HCT116 (cell line): ENCODE measurements at regions of chr11 and their contacts with region 1.

Region 1: DNA sequence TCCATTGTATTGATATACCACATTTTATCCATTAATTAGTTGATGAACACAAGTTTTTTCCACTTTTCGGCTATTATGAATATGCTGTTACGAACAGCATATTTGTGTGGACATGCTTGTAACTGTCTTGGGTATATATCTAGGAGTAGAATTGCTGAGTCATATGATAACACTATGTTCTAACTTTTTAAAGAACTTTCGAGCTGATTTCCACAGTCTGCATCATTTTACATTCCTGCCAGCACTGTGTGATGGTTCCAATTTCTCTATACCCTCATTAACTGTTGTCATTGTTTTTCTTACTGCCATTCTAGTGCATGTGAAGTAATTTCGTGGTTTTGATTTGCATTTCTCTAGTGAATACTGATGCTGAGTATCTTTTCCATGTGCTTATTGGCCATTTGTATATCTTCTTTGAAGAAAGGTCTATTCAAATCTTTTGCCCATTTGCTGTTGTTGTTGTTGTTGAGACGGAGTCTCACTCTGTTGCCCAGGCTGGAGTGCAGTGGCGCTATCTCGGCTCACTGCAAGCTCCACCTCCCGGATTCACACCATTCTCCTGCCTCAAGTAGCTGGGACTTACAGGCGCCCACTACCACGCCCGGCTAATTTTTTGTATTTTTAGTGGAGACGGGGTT is 7.4 kb upstream of the RCE1 start:
- DNase-seq: no peak
- ATAC-seq: no peak
- H3K4me3 ChIP-seq: no peak overlapping the region
- H3K27ac ChIP-seq: no peak overlapping the region
- H3K4me1 ChIP-seq: no peaks in the 10 kb centered on the region
- H3K27me3 ChIP-seq: no peaks in the 10 kb centered on the region
- CTCF ChIP-seq: no peak
- POLR2A ChIP-seq: no peak
- RAD21 ChIP-seq: no peak

Region 2: DNA sequence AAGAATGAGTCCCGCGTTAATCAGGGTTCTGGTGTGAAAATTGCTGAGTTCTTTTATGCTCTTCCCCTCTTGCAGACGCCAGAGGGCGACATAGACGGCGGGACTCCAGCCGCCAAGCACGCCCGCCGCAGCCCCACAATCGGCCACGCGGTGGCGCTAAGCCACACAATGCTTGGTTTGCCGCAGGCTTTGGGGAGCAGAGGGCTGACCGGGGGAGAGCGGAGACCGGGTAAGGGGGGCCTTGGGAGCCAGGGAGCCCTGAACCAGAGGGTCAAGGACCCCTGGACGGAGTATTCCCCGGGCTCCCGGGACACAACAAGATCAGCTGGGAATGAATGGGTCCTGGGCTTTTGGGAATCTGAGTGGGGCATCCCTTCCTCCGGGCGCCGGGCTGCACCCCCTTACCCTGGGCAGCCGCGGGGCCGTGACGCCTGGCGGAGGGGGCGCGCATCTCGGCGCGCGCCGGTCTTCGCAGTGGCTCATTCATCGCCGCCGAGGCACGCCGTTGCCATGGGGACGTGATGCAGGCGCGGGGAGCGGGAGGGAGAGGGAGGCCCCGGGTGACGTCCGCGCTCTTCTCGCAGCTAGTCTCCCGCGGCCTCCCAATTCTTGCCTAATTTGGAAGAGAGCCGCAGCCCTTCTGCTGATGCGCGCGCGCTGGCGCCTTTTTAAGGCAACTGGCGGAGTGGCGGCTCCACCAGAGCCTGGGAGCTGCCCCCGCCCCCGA is 427.2 kb before region 1 on chr11:
- CTCF ChIA-PET with region 1: no interaction called
- POLR2A ChIA-PET with region 1: no interaction called
- RAD21 ChIA-PET with region 1: no interaction called
- intact Hi-C with region 1: loop called (anchors 5 kb)
- DNase-seq: peak; percentile 62
- ATAC-seq: peak; percentile 92
- H3K4me3 ChIP-seq: peak overlapping the region; percentile 26 to 45; a peak in 3 of 4 replicates
- H3K27ac ChIP-seq: no peak overlapping the region
- H3K4me1 ChIP-seq: peaks cover 0 to 3% of the 10 kb centered on the region in 2 experiments; a peak in 1 of 4 replicates
- H3K27me3 ChIP-seq: peaks cover 16% of the 10 kb centered on the region; the same call in 1 of the 2 replicates
- CTCF ChIP-seq: peak; percentile 99 to 100 (median 100)
- POLR2A ChIP-seq: no peak
- RAD21 ChIP-seq: peak; percentile 99

Region 3: GRCh38 chr11:66438504-66439466 is 397.1 kb before region 1 on chr11 and contains the start of gene MRPL11:
- CTCF ChIA-PET with region 1: no interaction called
- POLR2A ChIA-PET with region 1: no interaction called
- RAD21 ChIA-PET with region 1: no interaction called
- intact Hi-C with region 1: loop called (anchors 10 kb)
- DNase-seq: peak; percentile 91
- ATAC-seq: peak; percentile 93
- H3K4me3 ChIP-seq: peak within 1 kb of the TSS; percentile 68 to 96
- H3K27ac ChIP-seq: peak within 1 kb of the TSS; percentile 85
- H3K4me1 ChIP-seq: peaks cover 4 to 23% of the 10 kb centered on the region in 2 experiments; a peak in 3 of 4 replicates
- H3K27me3 ChIP-seq: no peaks in the 10 kb centered on the region
- CTCF ChIP-seq: peak; percentile 54 to 60 (median 60); a peak in 5 of 6 replicates
- POLR2A ChIP-seq: peak; percentile 30
- RAD21 ChIP-seq: peak; percentile 49
- total RNA-seq, gene MRPL11: 126 TPM

Region 4: GRCh38 chr11:66579017-66579606 is 256.8 kb before region 1 on chr11:
- CTCF ChIA-PET with region 1: no interaction called
- POLR2A ChIA-PET with region 1: no interaction called
- RAD21 ChIA-PET with region 1: no interaction called
- intact Hi-C with region 1: loop called (anchors 5 kb)
- DNase-seq: peak; percentile 31
- ATAC-seq: peak; percentile 97
- H3K4me3 ChIP-seq: no peak overlapping the region
- H3K27ac ChIP-seq: no peak overlapping the region
- H3K4me1 ChIP-seq: 0 out of 4 replicates have a peak, but pooled peaks cover 0 to 3% of the 10 kb centered on the region in 2 experiments
- H3K27me3 ChIP-seq: no peaks in the 10 kb centered on the region
- CTCF ChIP-seq: peak; percentile 54 to 85 (median 80); a peak in 5 of 6 replicates
- POLR2A ChIP-seq: no peak
- RAD21 ChIP-seq: peak; percentile 75

Region 5: GRCh38 chr11:66694732-66695207 is 141.1 kb before region 1 on chr11:
- CTCF ChIA-PET with region 1: interaction called, 22 read pairs
- POLR2A ChIA-PET with region 1: no interaction called
- RAD21 ChIA-PET with region 1: interaction called in 1 of 2 experiments, 3 read pairs
- intact Hi-C with region 1: loop called (anchors 1 kb)
- DNase-seq: peak; percentile 96
- ATAC-seq: peak; percentile 96
- H3K4me3 ChIP-seq: no peak overlapping the region
- H3K27ac ChIP-seq: peak overlapping the region; percentile 41
- H3K4me1 ChIP-seq: peaks cover 2 to 5% of the 10 kb centered on the region in 2 experiments; a peak in 3 of 4 replicates
- H3K27me3 ChIP-seq: no peaks in the 10 kb centered on the region
- CTCF ChIP-seq: peak; percentile 99
- POLR2A ChIP-seq: no peak
- RAD21 ChIP-seq: peak; percentile 99